ENCODE measurements at regions of chr5 and their contacts with region 1.

Region 1: DNA sequence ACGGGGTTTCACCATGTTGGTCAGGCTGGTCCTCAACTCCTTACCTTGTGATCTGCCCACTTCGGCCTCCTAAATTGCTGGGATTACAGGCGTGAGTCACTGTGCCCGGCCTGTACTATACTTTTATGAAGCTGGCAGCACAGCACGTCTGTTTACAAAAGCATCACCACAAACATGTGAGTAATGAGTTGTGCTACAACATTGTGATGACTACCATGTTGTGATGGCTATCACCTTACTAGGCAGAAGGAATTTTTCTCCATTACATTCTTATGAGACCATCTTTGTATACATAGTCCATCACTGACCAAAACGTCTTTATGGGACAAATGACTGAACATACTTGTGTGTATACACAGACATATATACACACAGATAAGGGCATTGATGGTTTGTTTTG is 1019.0 kb downstream of the CDH18 start:
- DNase-seq: no peak

Region 2: GRCh38 chr5:20229301-20230005 is 1260.5 kb after region 1 on chr5:
- intact Hi-C with region 1: loop called in 1 of 2 experiments (anchors 5 kb)
- DNase-seq: no peak

Measured in posterior vena cava (tissue), 2 donors.